ENCODE measurements at regions of chr4 and their contacts with region 1.

Region 1: GRCh38 chr4:10013722-10014121 is 7.6 kb downstream of the SLC2A9 start:
- DNase-seq: peak; percentile 72
- H3K4me3 Mint-ChIP-seq: no peak overlapping the region
- H3K27ac Mint-ChIP-seq: no peak overlapping the region
- H3K4me1 Mint-ChIP-seq: peaks cover under 1% of the 10 kb centered on the region
- H3K27me3 Mint-ChIP-seq: no peaks in the 10 kb centered on the region
- CTCF ChIP-seq: peak; percentile 45

Region 2: DNA sequence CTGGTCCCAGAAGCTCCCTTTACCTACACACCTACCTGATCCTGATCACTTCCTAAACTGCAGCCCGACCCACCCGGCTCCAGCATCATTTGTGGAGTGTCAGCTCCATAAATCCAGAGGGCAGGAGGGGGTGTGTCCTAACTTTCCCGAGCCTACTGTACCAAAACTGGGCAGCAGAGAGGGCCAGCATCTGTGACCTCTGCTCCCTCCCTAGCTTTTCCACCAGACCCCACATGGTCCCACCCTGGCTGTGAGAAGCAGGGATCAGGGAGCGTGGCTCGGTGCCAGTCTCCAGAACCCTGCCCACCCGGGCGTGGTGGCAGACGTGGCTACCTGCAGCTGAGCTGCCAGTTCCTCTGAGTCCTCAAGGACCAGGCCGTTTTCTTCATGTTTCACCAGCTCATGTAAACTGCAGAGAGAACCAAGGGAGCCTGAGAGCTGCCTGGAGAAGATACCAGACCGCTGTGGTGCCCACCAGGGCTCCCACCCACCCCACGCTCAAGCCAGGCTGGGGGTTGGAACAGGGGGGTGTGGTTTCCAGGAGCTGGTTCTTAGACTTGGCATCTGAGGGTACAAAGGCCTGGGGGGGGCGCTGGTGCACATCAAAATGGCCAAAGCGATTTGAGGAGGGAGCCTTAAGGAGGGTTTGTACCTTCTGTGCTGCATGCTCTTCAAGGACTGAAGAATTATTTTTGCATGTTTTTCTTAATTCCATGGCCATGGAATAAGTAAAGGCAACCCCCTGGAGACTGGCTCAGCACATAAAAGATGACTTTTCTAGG is 309.0 kb before region 1 on chr4:
- CTCF ChIA-PET with region 1: interaction called, 6 read pairs
- intact Hi-C with region 1: loop called (anchors 2 kb)
- DNase-seq: no peak
- H3K4me3 Mint-ChIP-seq: no peak overlapping the region
- H3K27ac Mint-ChIP-seq: no peak overlapping the region
- H3K4me1 Mint-ChIP-seq: no peaks in the 10 kb centered on the region
- H3K27me3 Mint-ChIP-seq: no peaks in the 10 kb centered on the region
- CTCF ChIP-seq: no peak

Region 3: DNA sequence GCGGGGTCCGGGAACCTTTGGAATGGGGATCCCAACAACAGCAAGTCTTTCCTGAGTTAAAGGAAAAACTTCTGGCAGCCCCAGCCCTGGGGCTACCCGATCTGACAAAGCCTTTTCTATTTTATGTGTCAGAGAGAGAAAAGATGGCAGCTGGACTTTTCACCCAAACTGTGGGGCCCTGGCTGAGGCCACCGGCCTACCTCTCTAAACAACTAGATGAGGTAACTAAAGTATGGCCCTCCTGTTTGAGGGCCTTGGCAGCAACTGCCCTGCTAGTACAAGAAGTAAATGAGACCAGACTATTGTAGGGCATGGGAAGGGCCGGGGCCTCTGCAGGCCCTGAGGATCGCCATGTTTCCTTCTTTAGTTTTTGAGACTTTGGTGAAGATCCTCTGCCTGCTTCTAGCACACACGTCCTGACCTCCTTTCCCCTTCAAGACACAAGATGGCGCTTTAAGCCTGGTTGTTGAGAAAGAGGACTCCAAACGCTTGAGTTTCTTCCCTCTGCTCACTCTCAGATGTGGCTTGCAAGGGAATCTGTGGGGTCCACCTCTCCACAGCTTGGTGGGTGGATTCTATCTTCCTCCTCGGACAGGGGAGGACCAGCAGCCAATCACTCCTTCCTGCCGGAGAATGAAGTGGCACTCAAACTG is 250.8 kb before region 1 on chr4:
- CTCF ChIA-PET with region 1: interaction called, 15 read pairs
- intact Hi-C with region 1: loop called (anchors 1 kb)
- DNase-seq: peak; percentile 47
- H3K4me3 Mint-ChIP-seq: no peak overlapping the region
- H3K27ac Mint-ChIP-seq: no peak overlapping the region
- H3K4me1 Mint-ChIP-seq: no peaks in the 10 kb centered on the region
- H3K27me3 Mint-ChIP-seq: peaks cover 28% of the 10 kb centered on the region
- CTCF ChIP-seq: peak; percentile 14

Region 4: GRCh38 chr4:10140866-10141759 is 127.4 kb after region 1 on chr4:
- CTCF ChIA-PET with region 1: no interaction called
- intact Hi-C with region 1: no loop called
- DNase-seq: no peak
- H3K4me3 Mint-ChIP-seq: no peak overlapping the region
- H3K27ac Mint-ChIP-seq: no peak overlapping the region
- H3K4me1 Mint-ChIP-seq: no peaks in the 10 kb centered on the region
- H3K27me3 Mint-ChIP-seq: peaks cover 47% of the 10 kb centered on the region
- CTCF ChIP-seq: no peak

Region 5: GRCh38 chr4:10223782-10224181 is 210.1 kb after region 1 on chr4:
- CTCF ChIA-PET with region 1: no interaction called
- intact Hi-C with region 1: no loop called
- DNase-seq: no peak
- H3K4me3 Mint-ChIP-seq: no peak overlapping the region
- H3K27ac Mint-ChIP-seq: no peak overlapping the region
- H3K4me1 Mint-ChIP-seq: no peaks in the 10 kb centered on the region
- H3K27me3 Mint-ChIP-seq: no peaks in the 10 kb centered on the region
- CTCF ChIP-seq: no peak